ENCODE measurements at regions of chr12 and their contacts with region 1.

Region 1: DNA sequence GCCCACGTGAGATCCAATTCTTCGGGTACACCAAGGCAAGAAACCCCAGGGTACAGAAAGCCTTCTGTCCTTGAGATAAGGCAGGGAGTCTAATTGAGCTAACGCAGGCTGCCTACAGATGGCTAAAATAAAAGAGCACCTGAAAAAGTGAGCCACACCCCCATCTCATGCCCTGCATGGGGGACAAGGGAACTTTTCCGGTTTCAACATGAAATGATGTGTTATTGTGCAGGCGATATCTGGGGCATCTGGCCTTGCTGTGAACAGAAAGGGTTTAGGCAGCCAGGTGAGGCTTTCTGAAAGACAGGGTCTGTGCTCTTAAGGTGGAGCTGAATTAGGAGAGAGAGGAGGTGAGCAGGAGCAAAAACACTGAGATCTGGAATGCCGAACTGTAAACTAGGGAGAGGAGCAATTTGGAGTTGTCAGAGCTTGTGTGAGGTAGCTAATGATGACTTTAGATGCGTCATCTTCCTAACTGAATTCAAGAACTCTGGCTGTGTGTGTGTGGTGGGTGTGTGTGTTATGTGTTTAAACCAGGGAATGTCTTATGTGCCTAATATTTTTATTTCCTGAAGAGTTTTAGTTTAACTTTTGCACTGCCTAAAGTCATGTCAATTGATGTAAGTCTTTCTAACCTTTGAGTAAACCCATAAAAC is 20.1 kb upstream of the LDHB start:
- DNase-seq: no peak
- H3K4me3 Mint-ChIP-seq: no peak overlapping the region
- H3K27ac Mint-ChIP-seq: peak overlapping the region; percentile 57
- H3K4me1 Mint-ChIP-seq: peaks cover 32% of the 10 kb centered on the region
- H3K27me3 Mint-ChIP-seq: no peaks in the 10 kb centered on the region

Region 2: DNA sequence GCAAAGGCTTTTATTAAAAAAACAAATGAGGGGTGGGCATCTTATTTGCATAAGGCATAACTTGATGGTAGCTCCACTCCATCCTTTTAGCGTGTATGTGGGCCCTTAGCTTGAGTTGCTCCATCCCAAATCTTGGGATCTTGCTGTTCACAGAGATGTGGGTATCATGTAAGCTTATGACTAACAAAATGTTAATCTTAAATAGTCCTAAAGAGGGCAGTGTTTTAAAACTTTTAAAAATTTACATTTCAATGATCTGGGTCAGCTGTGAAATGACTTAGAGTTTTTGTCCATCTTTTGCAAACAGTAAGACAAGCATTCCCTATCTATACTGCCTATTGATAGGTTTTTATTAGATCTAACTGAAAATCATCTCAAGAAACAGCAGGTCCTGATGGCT is 429.1 kb before region 1 on chr12:
- intact Hi-C with region 1: loop called (anchors 1 kb)
- DNase-seq: no peak
- H3K4me3 Mint-ChIP-seq: no peak overlapping the region
- H3K27ac Mint-ChIP-seq: no peak overlapping the region
- H3K4me1 Mint-ChIP-seq: no peaks in the 10 kb centered on the region
- H3K27me3 Mint-ChIP-seq: no peaks in the 10 kb centered on the region

Region 3: DNA sequence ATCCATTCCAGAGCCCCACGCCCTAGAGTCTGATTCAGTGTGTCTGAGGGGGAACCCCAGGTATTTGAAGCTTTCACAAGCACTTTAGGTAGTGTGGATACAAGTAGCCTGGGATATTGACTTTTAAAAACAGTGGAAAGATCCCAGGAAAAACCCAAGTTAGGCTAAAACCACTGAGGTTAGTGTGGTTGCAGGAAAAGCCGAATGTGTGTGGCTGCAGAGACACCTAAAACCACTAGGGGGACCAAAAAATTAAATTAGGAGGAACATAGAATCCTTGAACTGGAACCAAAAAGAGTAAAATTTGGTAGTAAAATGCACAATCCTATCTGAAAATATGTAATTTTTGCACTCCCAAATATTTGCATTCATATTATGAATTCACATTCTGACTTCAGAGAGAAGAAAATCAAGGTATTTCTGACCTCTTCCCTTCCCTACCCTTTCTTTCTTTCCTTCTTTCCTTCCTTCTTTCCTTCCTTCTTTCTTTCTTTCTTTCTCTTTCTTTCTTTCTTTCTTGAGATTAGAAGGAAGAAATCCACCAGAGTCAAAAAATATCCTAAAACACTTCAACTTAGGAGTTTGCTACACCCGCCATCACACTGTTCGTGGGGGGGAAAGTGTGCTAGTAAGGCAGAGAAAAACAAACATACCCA is 380.9 kb before region 1 on chr12:
- intact Hi-C with region 1: loop called (anchors 2 kb)
- DNase-seq: peak; percentile 58
- H3K4me3 Mint-ChIP-seq: no peak overlapping the region
- H3K27ac Mint-ChIP-seq: no peak overlapping the region
- H3K4me1 Mint-ChIP-seq: peaks cover 4% of the 10 kb centered on the region
- H3K27me3 Mint-ChIP-seq: peaks cover 11% of the 10 kb centered on the region

Region 4: DNA sequence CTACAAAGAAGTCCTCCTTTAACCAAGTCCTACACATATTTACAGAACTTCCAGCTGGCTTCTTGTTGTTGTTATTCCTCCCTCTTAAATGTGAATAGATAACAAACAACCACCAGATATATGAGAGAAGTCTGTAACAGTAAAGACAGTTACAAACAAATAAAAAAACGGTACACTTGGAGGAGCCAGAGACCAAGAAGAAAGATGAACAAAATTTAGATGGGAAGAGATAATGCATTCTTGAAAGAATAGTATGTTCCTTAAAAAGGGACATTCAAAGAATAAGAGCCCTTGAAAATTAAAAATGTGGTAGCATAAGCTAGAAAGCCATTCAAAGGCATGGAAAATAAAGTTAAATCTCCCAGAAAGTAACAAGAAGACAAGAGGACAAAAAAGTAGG is 369.0 kb before region 1 on chr12:
- intact Hi-C with region 1: loop called (anchors 5 kb)
- DNase-seq: no peak
- H3K4me3 Mint-ChIP-seq: no peak overlapping the region
- H3K27ac Mint-ChIP-seq: no peak overlapping the region
- H3K4me1 Mint-ChIP-seq: no peaks in the 10 kb centered on the region
- H3K27me3 Mint-ChIP-seq: peaks cover 7% of the 10 kb centered on the region

Region 5: GRCh38 chr12:21607701-21608100 is 70.0 kb before region 1 on chr12:
- intact Hi-C with region 1: loop called (anchors 1 kb)
- DNase-seq: no peak
- H3K4me3 Mint-ChIP-seq: no peak overlapping the region
- H3K27ac Mint-ChIP-seq: no peak overlapping the region
- H3K4me1 Mint-ChIP-seq: no peaks in the 10 kb centered on the region
- H3K27me3 Mint-ChIP-seq: peaks cover 3% of the 10 kb centered on the region

Region 6: GRCh38 chr12:21613931-21614330 is 63.8 kb before region 1 on chr12:
- intact Hi-C with region 1: loop called (anchors 2 kb)
- DNase-seq: no peak
- H3K4me3 Mint-ChIP-seq: no peak overlapping the region
- H3K27ac Mint-ChIP-seq: no peak overlapping the region
- H3K4me1 Mint-ChIP-seq: peaks cover 36% of the 10 kb centered on the region
- H3K27me3 Mint-ChIP-seq: no peaks in the 10 kb centered on the region